GM12878 (cell line): ENCODE measurements at regions of chr1 and their contacts with region 1.

Region 1: DNA sequence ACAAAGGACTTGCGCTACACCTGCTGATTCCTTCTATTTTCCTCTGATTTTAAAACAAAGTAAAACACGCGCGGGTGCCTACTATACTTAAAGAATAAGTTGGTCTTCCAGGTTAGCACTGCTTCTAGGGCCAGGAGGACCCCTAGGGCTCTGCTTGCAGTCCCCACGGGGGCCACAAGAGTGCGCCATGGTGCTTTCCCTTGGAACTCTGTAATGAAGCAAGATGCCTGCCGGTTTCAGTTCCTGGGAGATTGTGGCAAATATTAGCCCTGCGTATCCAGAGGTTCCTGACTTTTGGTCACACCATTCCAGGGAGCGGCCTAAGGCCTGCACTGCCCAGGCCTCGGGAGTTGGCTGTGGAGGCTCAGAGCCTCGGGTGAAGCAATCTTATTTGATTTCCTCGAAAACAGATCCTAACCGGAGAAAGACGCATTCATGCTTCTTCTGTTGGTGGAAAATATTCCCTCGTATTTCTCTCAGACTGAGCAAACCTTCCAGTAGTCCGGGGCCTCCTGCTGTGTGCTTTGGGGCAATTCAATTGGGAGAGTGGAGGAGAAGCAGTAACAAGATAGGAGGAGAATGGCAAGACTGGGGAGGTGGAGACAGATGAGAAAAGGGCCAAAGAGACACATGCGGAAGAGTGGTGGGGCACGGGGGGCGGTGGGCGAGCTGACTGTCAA is 25.3 kb downstream of the ADAM30 start:
- DNase-seq: no peak
- ATAC-seq: peak; percentile 78
- H3K4me3 ChIP-seq: no peak overlapping the region
- H3K27ac ChIP-seq: no peak overlapping the region
- H3K4me1 ChIP-seq: no peaks in the 10 kb centered on the region
- H3K27me3 ChIP-seq: no peaks in the 10 kb centered on the region; a peak in 1 of 4 replicates
- CTCF ChIP-seq: peak; percentile 67 to 87 (median 85)
- EP300 ChIP-seq: no peak
- POLR2A ChIP-seq: no peak
- RAD21 ChIP-seq: peak; percentile 73

Region 2: GRCh38 chr1:119885903-119886783 is 15.1 kb after region 1 on chr1:
- CTCF ChIA-PET with region 1: interaction called, 13 read pairs
- POLR2A ChIA-PET with region 1: no interaction called
- RAD21 ChIA-PET with region 1: no interaction called
- SMC1A ChIA-PET with region 1: interaction called, 3 read pairs
- in situ Hi-C with region 1: no loop called
- intact Hi-C with region 1: no loop called
- DNase-seq: no peak
- ATAC-seq: peak; percentile 88
- H3K4me3 ChIP-seq: no peak overlapping the region
- H3K27ac ChIP-seq: no peak overlapping the region
- H3K4me1 ChIP-seq: no peaks in the 10 kb centered on the region
- H3K27me3 ChIP-seq: no peaks in the 10 kb centered on the region; a peak in 2 of 4 replicates
- CTCF ChIP-seq: peak; percentile 61 to 74 (median 67)
- EP300 ChIP-seq: no peak
- POLR2A ChIP-seq: no peak
- RAD21 ChIP-seq: peak; percentile 48

Region 3: DNA sequence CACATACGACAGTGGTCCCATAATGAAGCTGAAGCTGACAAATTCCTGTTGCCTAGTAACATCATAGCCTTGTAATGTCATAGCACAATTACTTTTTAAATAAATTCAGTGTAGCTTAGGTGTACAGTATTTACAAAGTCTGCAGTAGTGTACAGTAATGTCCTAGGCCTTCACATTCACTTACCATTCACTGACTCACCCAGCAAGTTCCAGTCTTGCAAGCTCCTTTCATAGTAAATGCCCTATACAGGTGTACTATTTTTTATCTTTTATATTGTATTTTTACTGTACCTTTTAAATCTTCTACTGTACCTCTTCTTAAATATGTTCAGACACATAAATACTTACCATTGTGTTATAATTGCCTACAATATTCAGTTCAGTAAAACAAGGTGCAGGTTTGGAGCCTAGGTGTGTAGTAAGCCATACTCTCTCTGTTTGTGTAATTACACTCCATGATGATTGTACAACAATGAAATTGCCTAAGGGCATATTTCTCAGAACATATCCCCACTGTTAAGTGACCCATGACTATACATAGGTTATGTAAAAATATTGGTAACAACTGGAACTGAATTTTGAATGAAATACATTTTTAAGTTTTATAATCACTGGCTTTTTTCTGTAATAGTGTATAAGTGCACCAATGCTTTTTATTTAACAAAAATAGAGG is 58.7 kb after region 1 on chr1:
- CTCF ChIA-PET with region 1: interaction called, 3 read pairs
- POLR2A ChIA-PET with region 1: no interaction called
- RAD21 ChIA-PET with region 1: no interaction called
- SMC1A ChIA-PET with region 1: no interaction called
- in situ Hi-C with region 1: loop called (anchors 10 kb)
- intact Hi-C with region 1: no loop called
- DNase-seq: no peak
- ATAC-seq: no peak
- H3K4me3 ChIP-seq: no peak overlapping the region
- H3K27ac ChIP-seq: no peak overlapping the region
- H3K4me1 ChIP-seq: no peaks in the 10 kb centered on the region
- H3K27me3 ChIP-seq: no peaks in the 10 kb centered on the region
- CTCF ChIP-seq: no peak
- EP300 ChIP-seq: no peak
- POLR2A ChIP-seq: no peak
- RAD21 ChIP-seq: no peak

Region 4: DNA sequence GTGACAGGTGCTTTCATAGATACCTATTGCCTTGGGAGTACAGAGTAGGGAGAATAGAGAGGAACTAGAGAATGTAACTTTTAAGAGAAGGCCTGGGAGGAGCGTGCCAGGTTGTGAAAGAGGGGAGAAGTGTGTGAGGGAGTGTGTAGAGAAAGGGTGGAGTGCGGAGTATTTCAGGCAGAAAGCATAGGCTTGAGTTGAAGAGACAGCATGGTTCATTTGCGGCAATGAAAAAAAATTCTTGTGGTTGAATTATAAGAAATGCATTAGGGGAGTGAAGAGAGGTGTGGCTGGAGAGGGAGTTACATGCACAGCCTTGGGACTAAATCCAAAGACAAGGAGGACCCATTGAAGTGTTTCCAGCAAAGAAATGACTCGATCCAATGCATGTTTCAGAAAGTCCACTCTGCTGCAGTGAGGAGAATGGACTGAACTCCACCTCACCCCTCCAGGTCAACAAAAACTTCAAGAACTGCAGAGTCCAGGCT is 107.0 kb after region 1 on chr1:
- CTCF ChIA-PET with region 1: no interaction called
- POLR2A ChIA-PET with region 1: no interaction called
- RAD21 ChIA-PET with region 1: no interaction called
- SMC1A ChIA-PET with region 1: no interaction called
- in situ Hi-C with region 1: no loop called
- intact Hi-C with region 1: no loop called
- DNase-seq: no peak
- ATAC-seq: no peak
- H3K4me3 ChIP-seq: no peak overlapping the region
- H3K27ac ChIP-seq: no peak overlapping the region
- H3K4me1 ChIP-seq: no peaks in the 10 kb centered on the region
- H3K27me3 ChIP-seq: no peaks in the 10 kb centered on the region
- CTCF ChIP-seq: no peak
- EP300 ChIP-seq: no peak
- POLR2A ChIP-seq: no peak
- RAD21 ChIP-seq: no peak